ENCODE measurements at regions of chr11 and their contacts with region 1.

Region 1: DNA sequence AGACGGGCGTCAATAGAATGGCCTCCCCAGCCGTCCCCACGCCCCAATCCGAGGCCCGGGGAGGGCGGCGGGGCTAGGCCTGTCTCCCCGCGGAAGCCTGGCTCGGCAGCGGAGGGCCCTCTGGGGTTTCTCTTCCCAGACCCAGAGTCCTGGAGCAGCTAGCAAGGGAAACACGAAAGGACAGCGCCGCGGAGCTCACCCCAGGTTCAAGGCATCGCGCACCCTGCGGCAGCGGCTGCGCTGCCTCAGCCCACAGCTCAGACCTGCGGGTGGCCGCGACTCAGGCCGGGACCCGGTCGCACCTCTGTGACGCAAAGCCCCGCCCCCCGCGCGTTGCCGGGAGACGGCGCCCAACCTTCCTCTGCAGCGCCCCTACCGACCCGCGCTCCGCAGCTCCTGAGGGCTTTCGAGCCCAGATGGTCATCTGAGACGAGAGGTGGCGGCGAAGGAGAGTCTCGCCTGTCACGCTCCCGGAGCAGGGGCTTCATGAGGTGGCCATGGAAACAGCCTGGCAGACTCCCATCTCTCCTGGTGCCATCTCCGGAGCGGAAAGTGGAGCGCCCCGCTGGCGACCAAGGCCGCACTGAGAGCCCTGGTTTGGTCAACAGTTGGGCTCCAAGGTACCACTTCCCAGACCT is at the start of gene RNF141:
- DNase-seq: peak; percentile 93
- H3K4me3 Mint-ChIP-seq: peak within 1 kb of the TSS; percentile 81
- H3K27ac Mint-ChIP-seq: peak within 1 kb of the TSS; percentile 94
- H3K4me1 Mint-ChIP-seq: peaks cover 13% of the 10 kb centered on the region
- H3K27me3 Mint-ChIP-seq: no peaks in the 10 kb centered on the region
- CTCF ChIP-seq: peak; percentile 59
- total RNA-seq, gene RNF141: 28.4 and 41.8 TPM in 2 replicates

Region 2: GRCh38 chr11:10405855-10406592 is 135.0 kb before region 1 on chr11:
- CTCF ChIA-PET with region 1: interaction called, 19 read pairs
- POLR2A ChIA-PET with region 1: interaction called, 20 read pairs
- intact Hi-C with region 1: loop called (anchors 1 kb)
- DNase-seq: peak; percentile 89
- H3K4me3 Mint-ChIP-seq: no peak overlapping the region
- H3K27ac Mint-ChIP-seq: peak overlapping the region; percentile 40
- H3K4me1 Mint-ChIP-seq: peaks cover 26% of the 10 kb centered on the region
- H3K27me3 Mint-ChIP-seq: no peaks in the 10 kb centered on the region
- CTCF ChIP-seq: peak; percentile 63

Region 3: DNA sequence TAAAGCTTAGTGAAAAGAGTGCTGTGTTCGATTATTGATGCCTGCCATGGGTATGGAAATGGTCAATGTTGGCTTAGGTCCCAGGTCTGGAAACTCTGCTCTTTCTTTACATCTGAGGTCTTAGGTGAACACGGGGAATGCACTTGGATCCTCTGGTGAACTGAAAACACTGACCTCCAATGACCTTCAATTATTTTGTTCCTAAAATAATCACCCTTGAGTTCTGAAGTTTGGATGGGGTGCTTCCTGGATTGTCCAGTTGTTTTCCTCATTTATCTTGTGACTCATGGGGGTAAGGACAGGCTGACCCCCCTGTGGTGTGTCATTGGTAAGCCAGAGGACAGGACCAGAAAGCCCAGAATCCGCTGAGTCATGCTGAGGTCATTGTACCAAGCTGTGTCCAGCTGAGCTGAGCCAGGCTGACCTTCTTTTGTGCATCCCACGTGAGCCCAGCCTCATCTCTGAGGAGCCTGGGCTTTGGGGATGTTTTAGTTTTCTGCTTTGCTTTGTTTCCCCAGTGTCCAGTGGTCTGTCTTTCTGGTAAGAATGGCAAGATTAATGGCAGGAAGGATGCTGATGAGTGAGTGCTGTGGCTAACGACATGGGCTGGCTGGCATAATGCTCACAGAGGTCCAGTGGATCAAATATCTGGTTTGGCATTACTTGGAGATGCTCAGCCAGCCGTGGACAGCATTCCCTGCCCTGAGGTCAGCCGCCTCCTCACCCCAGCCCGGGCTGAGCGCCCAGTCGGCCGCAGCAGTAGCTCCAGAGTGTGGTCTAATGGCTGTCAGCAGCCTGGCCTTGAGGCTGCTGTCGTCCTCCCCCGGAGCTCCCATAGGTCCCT is 50.4 kb before region 1 on chr11:
- CTCF ChIA-PET with region 1: interaction called, 13 read pairs
- POLR2A ChIA-PET with region 1: interaction called, 48 read pairs
- intact Hi-C with region 1: no loop called
- DNase-seq: peak; percentile 87
- H3K4me3 Mint-ChIP-seq: no peak overlapping the region
- H3K27ac Mint-ChIP-seq: peak overlapping the region; percentile 96
- H3K4me1 Mint-ChIP-seq: peaks cover 23% of the 10 kb centered on the region
- H3K27me3 Mint-ChIP-seq: no peaks in the 10 kb centered on the region
- CTCF ChIP-seq: no peak

Region 4: DNA sequence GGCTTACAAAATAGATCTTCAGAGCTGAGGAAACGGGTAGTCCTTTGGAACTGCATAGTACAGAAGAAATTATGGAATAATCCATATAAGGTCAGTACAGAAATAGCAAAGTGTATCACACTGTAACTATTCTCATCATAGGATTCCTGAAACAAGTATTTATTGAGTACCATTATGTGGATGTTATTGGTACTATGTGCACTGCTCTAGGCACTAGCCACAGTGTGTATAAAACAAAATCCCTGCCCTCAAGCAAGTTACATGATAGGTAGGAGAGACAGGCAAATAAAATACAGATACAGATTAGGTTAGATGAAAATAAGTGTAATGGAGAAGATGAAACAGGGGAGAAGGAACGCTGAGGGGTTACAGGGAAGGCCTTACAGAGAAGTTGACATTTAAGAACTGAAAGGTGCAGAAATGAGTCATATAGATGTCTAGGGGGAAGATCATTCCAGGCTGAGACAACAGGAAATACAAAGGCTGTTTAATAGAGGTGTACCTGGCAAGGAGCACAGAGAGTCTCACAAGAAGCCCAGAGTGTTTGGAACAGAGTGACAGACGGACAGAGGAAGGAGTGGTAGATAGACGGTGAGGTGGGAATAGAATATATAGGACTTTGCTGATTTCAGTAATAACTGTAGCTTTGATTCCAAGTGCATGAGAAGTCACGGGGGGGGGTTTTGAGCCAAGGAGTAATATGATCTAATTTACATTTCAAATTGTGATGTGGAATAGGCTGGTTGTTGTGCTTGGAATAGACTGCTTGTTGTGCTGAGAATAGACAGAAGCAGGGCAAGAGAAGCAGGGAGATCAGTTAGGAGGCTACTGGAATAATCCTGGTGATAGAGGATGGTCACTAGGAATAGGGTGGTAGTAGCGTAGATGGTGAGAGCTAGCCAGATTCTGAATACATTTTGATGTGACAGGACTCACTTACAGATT is 13.8 kb before region 1 on chr11:
- CTCF ChIA-PET with region 1: interaction called, 23 read pairs
- POLR2A ChIA-PET with region 1: interaction called, 17 read pairs
- intact Hi-C with region 1: no loop called
- DNase-seq: peak; percentile 48
- H3K4me3 Mint-ChIP-seq: no peak overlapping the region
- H3K27ac Mint-ChIP-seq: peak overlapping the region; percentile 68
- H3K4me1 Mint-ChIP-seq: peaks cover 22% of the 10 kb centered on the region
- H3K27me3 Mint-ChIP-seq: no peaks in the 10 kb centered on the region
- CTCF ChIP-seq: no peak

Region 5: GRCh38 chr11:10592331-10592730 is 51.3 kb after region 1 on chr11:
- CTCF ChIA-PET with region 1: interaction called, 5 read pairs
- POLR2A ChIA-PET with region 1: interaction called, 32 read pairs
- intact Hi-C with region 1: no loop called
- DNase-seq: peak; percentile 72
- H3K4me3 Mint-ChIP-seq: no peak overlapping the region
- H3K27ac Mint-ChIP-seq: peak overlapping the region; percentile 90
- H3K4me1 Mint-ChIP-seq: peaks cover 44% of the 10 kb centered on the region
- H3K27me3 Mint-ChIP-seq: no peaks in the 10 kb centered on the region
- CTCF ChIP-seq: no peak

Region 6: GRCh38 chr11:10612216-10612862 is 71.3 kb after region 1 on chr11:
- CTCF ChIA-PET with region 1: interaction called, 11 read pairs
- POLR2A ChIA-PET with region 1: interaction called, 6 read pairs
- intact Hi-C with region 1: no loop called
- DNase-seq: no peak
- H3K4me3 Mint-ChIP-seq: no peak overlapping the region
- H3K27ac Mint-ChIP-seq: no peak overlapping the region
- H3K4me1 Mint-ChIP-seq: no peaks in the 10 kb centered on the region
- H3K27me3 Mint-ChIP-seq: peaks cover 24% of the 10 kb centered on the region
- CTCF ChIP-seq: no peak

Region 7: DNA sequence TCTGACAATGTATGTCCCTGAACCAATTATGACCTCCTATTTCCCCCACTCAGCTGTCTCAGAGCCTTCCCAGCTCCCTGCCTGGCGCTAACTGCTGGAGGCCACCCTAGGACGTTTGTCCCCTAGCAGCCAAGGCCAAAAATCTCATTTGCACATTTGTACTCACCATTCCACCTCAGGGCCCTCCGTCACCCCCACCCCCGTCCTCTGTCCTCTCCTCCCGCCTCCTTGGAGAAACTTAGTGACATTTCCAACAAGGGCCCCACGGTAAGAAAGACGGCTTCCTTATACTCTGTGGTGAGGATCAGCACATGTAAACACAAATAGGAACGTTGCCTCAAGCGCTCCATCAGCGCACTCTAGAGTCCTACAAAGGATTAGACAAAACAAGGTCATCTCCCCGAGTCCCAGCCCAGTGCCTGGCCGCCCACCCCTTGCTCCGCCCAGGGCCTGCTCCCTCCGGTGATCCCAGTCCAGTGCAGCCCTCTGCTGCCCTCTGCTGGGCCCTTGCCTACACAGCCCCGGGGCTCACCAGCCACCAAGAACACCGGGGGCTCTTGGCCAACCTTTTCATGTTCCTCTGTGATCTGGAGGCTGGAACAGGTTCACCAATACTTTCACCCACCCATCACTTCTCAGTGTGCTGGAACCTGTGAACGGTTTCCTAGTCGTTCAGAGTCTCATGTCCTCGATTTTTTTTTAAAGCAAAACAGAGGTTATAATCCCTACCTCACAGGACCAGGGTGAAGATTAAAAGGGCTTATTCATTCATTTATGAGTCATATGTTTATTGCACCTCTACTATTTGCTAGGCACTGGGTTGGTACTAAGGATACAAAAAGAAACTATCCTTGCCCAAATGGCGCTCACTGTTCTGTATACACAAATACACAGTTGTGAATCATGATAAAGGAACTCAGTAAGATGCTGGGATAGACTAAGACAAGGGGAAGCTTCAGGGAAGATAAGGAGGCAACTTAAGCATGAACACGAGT is 194.7 kb after region 1 on chr11:
- CTCF ChIA-PET with region 1: interaction called, 3 read pairs
- POLR2A ChIA-PET with region 1: interaction called, 4 read pairs
- intact Hi-C with region 1: loop called (anchors 1 kb)
- DNase-seq: peak; percentile 93
- H3K4me3 Mint-ChIP-seq: peak overlapping the region; percentile 66
- H3K27ac Mint-ChIP-seq: peak overlapping the region; percentile 82
- H3K4me1 Mint-ChIP-seq: peaks cover 14% of the 10 kb centered on the region
- H3K27me3 Mint-ChIP-seq: no peaks in the 10 kb centered on the region
- CTCF ChIP-seq: peak; percentile 98

Region 8: GRCh38 chr11:11044137-11044855 is 503.3 kb after region 1 on chr11:
- CTCF ChIA-PET with region 1: no interaction called
- POLR2A ChIA-PET with region 1: no interaction called
- intact Hi-C with region 1: no loop called
- DNase-seq: no peak
- H3K4me3 Mint-ChIP-seq: no peak overlapping the region
- H3K27ac Mint-ChIP-seq: no peak overlapping the region
- H3K4me1 Mint-ChIP-seq: peaks cover 5% of the 10 kb centered on the region
- H3K27me3 Mint-ChIP-seq: no peaks in the 10 kb centered on the region
- CTCF ChIP-seq: no peak

Measured in MCF 10A (cell line).